ENCODE measurements at regions of chr3 and their contacts with region 1.

Region 1: GRCh38 chr3:18751514-18751913 is 326.4 kb upstream of the SATB1 start:
- DNase-seq: no peak
- H3K4me3 ChIP-seq: no peak overlapping the region
- H3K27ac ChIP-seq: no peak overlapping the region
- H3K4me1 ChIP-seq: no peaks in the 10 kb centered on the region
- H3K27me3 ChIP-seq: no peaks in the 10 kb centered on the region
- CTCF ChIP-seq: no peak
- POLR2A ChIP-seq: no peak

Region 2: DNA sequence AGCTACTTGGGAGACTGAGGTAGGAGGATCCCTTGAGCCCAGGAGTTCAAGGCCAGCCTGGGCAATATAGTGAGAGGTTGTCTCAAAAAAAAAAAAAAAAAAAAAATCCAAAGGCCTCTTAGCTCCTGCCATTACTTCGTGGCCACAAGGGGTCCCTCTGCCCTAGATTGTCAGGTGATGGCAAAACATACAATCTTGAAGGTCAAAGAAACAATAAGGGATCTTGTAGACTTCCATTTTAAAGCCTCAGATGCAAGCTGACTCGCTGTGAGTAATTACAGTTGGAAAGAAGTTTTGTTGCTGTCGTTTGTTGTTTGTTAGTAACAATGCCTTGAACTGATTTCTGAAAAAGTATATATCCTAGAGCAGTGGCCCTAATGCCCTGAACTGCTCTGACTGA is 1922.7 kb before region 1 on chr3:
- intact Hi-C with region 1: no loop called
- DNase-seq: no peak
- H3K4me3 ChIP-seq: no peak overlapping the region
- H3K27ac ChIP-seq: no peak overlapping the region
- H3K4me1 ChIP-seq: no peaks in the 10 kb centered on the region
- H3K27me3 ChIP-seq: no peaks in the 10 kb centered on the region
- CTCF ChIP-seq: no peak
- POLR2A ChIP-seq: no peak

Region 3: DNA sequence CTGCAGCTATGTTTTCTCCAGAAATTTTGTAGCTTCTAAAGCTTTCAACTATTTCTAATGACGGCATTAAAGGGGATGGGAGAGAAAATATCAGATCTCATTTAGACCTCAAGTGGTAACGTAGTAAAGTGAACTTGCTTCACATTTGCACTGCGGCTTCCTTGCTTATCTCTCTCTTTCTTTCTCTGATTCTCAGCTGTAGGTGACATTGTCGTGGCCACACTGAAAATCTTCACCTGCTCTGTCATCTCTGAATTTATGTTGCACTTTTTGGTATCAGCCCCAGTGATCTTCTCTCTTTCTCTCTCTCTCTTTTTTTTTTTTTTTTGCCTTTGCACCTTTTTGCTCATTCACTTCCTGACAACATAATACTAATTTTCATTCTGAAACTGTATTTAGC is 72.3 kb before region 1 on chr3:
- intact Hi-C with region 1: no loop called
- DNase-seq: no peak
- H3K4me3 ChIP-seq: no peak overlapping the region
- H3K27ac ChIP-seq: no peak overlapping the region
- H3K4me1 ChIP-seq: no peaks in the 10 kb centered on the region
- H3K27me3 ChIP-seq: no peaks in the 10 kb centered on the region
- CTCF ChIP-seq: no peak
- POLR2A ChIP-seq: no peak

Region 4: DNA sequence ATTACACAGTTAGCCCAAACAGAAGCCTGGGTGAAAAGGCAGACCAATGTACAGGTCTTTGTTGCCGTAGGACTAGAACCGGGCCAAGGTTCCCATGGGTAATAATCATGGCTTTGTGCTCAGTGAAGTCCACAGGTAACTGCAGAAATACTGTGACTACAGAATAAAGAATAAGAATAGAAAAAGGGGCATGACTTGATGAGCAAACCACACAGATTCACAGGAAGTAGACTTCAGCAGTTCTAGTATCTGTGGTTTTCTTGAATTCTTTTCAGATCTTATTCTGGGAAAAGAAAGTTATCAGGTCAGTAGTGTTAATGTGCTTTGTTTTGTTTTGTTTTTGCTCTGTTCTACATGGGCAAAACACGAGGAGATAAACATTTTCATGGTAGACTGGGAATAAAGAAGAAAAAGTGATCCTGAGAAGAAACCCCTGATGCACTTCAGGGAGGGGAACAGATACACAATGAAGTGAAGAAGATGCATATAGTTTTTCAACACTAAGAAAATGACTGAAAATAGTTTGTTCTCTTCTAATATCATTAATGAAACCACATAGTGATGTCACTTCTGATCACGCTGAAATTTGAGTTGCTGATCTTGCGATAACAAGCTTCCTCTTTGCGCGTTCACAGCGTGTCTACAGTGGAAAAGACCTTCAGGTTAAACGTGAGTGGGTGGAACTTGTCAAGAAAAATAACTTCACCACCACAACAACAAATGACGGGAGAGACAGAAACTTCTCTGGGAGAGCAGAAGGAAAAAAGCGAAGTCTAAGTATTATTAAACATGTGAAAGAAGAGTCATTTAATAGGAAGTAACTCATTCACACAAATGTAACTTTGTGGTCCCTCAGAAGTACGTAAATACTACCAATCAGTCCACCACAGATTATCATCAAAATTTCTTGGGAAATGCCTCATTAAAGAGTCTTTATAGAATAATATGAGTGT is 10.6 kb before region 1 on chr3:
- intact Hi-C with region 1: loop called (anchors 1 kb)
- DNase-seq: no peak
- H3K4me3 ChIP-seq: no peak overlapping the region
- H3K27ac ChIP-seq: no peak overlapping the region
- H3K4me1 ChIP-seq: no peaks in the 10 kb centered on the region
- H3K27me3 ChIP-seq: no peaks in the 10 kb centered on the region
- CTCF ChIP-seq: no peak
- POLR2A ChIP-seq: no peak

Region 5: GRCh38 chr3:18812316-18812715 is 60.8 kb after region 1 on chr3:
- intact Hi-C with region 1: no loop called
- DNase-seq: no peak
- H3K4me3 ChIP-seq: no peak overlapping the region
- H3K27ac ChIP-seq: no peak overlapping the region
- H3K4me1 ChIP-seq: no peaks in the 10 kb centered on the region
- H3K27me3 ChIP-seq: no peaks in the 10 kb centered on the region
- CTCF ChIP-seq: no peak
- POLR2A ChIP-seq: no peak

Measured in breast epithelium (tissue), 4 donors.